B cell (primary cell): ENCODE measurements at regions of chr10 and their contacts with region 1.

Region 1: GRCh38 chr10:16777473-16778370 is 39.5 kb downstream of the RSU1 start:
- DNase-seq: peak; percentile 68
- ATAC-seq: no peak
- H3K4me3 ChIP-seq: no peak overlapping the region
- H3K4me3 Mint-ChIP-seq: no peak overlapping the region
- H3K27ac ChIP-seq: no peak overlapping the region
- H3K27ac Mint-ChIP-seq: peak overlapping the region; percentile 65
- H3K4me1 ChIP-seq: peaks cover 10 to 14% of the 10 kb centered on the region in 2 donors
- H3K4me1 Mint-ChIP-seq: peaks cover 24% of the 10 kb centered on the region
- H3K27me3 ChIP-seq: no peaks in the 10 kb centered on the region
- H3K27me3 Mint-ChIP-seq: no peaks in the 10 kb centered on the region
- CTCF ChIP-seq: peak; percentile 87

Region 2: GRCh38 chr10:15879058-15879457 is 898.7 kb before region 1 on chr10:
- CTCF ChIA-PET with region 1: no interaction called
- POLR2A ChIA-PET with region 1: no interaction called
- intact Hi-C with region 1: loop called (anchors 5 kb)
- DNase-seq: peak; percentile 26
- ATAC-seq: no peak
- H3K4me3 ChIP-seq: no peak overlapping the region
- H3K4me3 Mint-ChIP-seq: no peak overlapping the region
- H3K27ac ChIP-seq: no peak overlapping the region
- H3K27ac Mint-ChIP-seq: no peak overlapping the region
- H3K4me1 ChIP-seq: no peaks in the 10 kb centered on the region
- H3K4me1 Mint-ChIP-seq: no peaks in the 10 kb centered on the region
- H3K27me3 ChIP-seq: peaks cover 0 to 15% (median 6%) of the 10 kb centered on the region in 4 experiments
- H3K27me3 Mint-ChIP-seq: peaks cover 55% of the 10 kb centered on the region
- CTCF ChIP-seq: peak; percentile 62

Region 3: DNA sequence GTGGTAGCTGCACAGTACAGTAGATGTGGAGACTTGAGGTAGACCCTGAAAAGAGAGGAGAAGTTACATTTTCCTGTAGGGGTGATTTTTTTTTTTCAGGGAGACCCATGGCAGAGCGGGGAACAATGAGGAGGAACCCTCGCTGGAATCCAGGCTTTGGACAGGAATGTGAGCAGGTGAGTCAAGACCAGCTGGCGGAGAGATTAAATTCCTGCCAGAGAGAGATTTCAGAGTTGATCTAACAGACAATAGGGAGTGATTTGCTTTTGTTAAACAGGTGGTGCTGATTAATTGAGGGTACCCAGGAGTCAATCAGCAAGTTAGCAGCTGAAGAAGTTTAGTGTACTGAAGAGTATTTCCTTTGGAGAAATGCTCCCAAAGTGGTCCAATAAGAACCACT is 875.8 kb before region 1 on chr10:
- CTCF ChIA-PET with region 1: interaction called, 22 read pairs
- POLR2A ChIA-PET with region 1: no interaction called
- intact Hi-C with region 1: no loop called
- DNase-seq: no peak
- ATAC-seq: no peak
- H3K4me3 ChIP-seq: no peak overlapping the region
- H3K4me3 Mint-ChIP-seq: no peak overlapping the region
- H3K27ac ChIP-seq: no peak overlapping the region
- H3K27ac Mint-ChIP-seq: no peak overlapping the region
- H3K4me1 ChIP-seq: no peaks in the 10 kb centered on the region
- H3K4me1 Mint-ChIP-seq: no peaks in the 10 kb centered on the region
- H3K27me3 ChIP-seq: peaks cover 0 to 4% (median 0%) of the 10 kb centered on the region in 4 experiments
- H3K27me3 Mint-ChIP-seq: peaks cover 24% of the 10 kb centered on the region
- CTCF ChIP-seq: no peak

Region 4: DNA sequence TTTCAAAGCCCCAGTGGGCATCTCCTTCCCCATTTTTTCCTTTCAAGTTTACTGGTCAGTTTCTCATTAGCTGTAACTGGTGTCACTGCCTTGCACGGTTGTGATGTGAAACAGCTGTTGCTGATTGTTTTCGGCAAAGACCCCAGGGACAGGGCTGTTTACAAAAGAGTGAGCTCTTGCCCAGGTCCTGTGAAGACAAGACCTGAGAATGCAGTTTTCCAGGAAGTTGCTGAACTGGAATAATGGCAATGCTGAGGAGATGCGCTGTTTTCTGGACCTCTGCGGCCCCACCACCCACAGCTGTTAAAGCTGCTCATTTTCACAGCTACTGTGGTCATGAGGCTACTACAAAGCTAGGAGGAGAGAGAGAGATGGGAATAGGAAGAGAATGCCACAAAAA is 156.1 kb after region 1 on chr10:
- CTCF ChIA-PET with region 1: no interaction called
- POLR2A ChIA-PET with region 1: no interaction called
- intact Hi-C with region 1: no loop called
- DNase-seq: no peak
- ATAC-seq: no peak
- H3K4me3 ChIP-seq: no peak overlapping the region
- H3K4me3 Mint-ChIP-seq: no peak overlapping the region
- H3K27ac ChIP-seq: no peak overlapping the region
- H3K27ac Mint-ChIP-seq: no peak overlapping the region
- H3K4me1 ChIP-seq: no peaks in the 10 kb centered on the region
- H3K4me1 Mint-ChIP-seq: no peaks in the 10 kb centered on the region
- H3K27me3 ChIP-seq: no peaks in the 10 kb centered on the region
- H3K27me3 Mint-ChIP-seq: peaks cover 5% of the 10 kb centered on the region
- CTCF ChIP-seq: no peak

Region 5: GRCh38 chr10:17430647-17431355 is 653.1 kb after region 1 on chr10:
- CTCF ChIA-PET with region 1: no interaction called
- POLR2A ChIA-PET with region 1: no interaction called
- intact Hi-C with region 1: no loop called
- DNase-seq: peak; percentile 60
- ATAC-seq: peak; percentile 47
- H3K4me3 ChIP-seq: no peak overlapping the region
- H3K4me3 Mint-ChIP-seq: peak overlapping the region; percentile 10
- H3K27ac ChIP-seq: no peak overlapping the region
- H3K27ac Mint-ChIP-seq: no peak overlapping the region
- H3K4me1 ChIP-seq: peaks cover 34 to 36% of the 10 kb centered on the region in 2 donors
- H3K4me1 Mint-ChIP-seq: peaks cover 44% of the 10 kb centered on the region
- H3K27me3 ChIP-seq: peaks cover 0 to 18% (median 8%) of the 10 kb centered on the region in 4 experiments
- H3K27me3 Mint-ChIP-seq: peaks cover 34% of the 10 kb centered on the region
- CTCF ChIP-seq: peak; percentile 85